Pancreas (tissue), 10 donors: ENCODE measurements at regions of chr4 and their contacts with region 1.

Region 1: DNA sequence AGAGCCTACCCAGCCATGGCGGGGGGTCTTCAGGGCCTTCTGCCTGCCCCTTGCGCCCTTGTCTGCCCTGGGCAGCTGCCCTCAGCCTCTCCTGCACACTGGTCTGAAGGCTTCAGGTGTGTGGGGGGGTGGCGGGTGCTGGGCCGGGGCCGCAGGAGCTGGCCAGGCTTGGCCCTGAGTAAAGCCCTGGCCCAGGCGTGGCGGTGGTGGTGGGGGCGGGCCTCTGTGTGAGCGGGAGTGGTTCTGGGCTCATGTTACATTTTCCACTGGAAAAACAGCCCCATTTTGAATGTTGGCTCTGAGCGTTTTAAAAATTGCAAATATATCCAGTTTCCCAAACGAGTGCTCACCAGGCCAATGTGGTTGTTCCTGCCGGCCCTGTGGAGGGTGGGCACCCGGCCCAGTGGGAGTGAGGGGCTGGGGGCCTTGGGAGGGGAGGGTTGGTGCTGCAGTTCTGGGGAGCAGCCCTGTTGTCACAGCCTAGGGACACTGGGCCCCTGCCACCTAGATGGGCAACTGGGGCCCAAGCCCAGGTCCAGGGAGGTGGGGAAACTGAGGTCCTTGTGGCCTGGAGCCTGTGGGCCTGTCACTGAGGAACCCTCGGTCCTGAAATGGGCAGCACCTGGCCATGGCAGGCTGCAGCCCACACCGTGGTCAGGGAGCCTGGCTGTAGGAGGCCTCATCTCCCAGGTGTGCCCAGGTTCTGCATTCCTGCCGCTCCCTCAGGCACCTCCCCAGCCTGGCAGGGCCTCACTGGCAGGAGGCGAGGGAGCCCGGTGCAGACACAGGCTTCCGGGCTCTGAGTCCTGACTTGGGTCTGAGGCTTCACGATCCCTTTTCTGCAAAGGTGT is 28.3 kb downstream of the FGFRL1 start:
- DNase-seq: peak; percentile 63 to 82 (median 72)
- ATAC-seq: peak; percentile 63 to 80 (median 77)
- H3K4me3 ChIP-seq: no peak overlapping the region
- H3K27ac ChIP-seq: peak overlapping the region in 2 of 4 donors; percentile 22 to 41
- H3K4me1 ChIP-seq: peaks cover 4 to 9% (median 5%) of the 10 kb centered on the region in 3 donors
- H3K27me3 ChIP-seq: no peaks in the 10 kb centered on the region
- CTCF ChIP-seq: no peak

Region 2: GRCh38 chr4:288891-289290 is 750.8 kb before region 1 on chr4:
- intact Hi-C with region 1: loop called in 1 of 3 experiments (anchors 10 kb)
- DNase-seq: no peak
- ATAC-seq: no peak
- H3K4me3 ChIP-seq: no peak overlapping the region
- H3K27ac ChIP-seq: no peak overlapping the region
- H3K4me1 ChIP-seq: no peaks in the 10 kb centered on the region
- H3K27me3 ChIP-seq: no peaks in the 10 kb centered on the region
- CTCF ChIP-seq: no peak

Region 3: GRCh38 chr4:1200425-1201035 is 160.8 kb after region 1 on chr4:
- intact Hi-C with region 1: no loop called
- DNase-seq: peak in 4 of 6 donors; percentile 14 to 70 (median 28)
- ATAC-seq: peak in 3 of 4 donors; percentile 15 to 39 (median 30)
- H3K4me3 ChIP-seq: peak overlapping the region in 1 of 4 donors; percentile 3
- H3K27ac ChIP-seq: no peak overlapping the region
- H3K4me1 ChIP-seq: no peaks in the 10 kb centered on the region
- H3K27me3 ChIP-seq: no peaks in the 10 kb centered on the region
- CTCF ChIP-seq: no peak

Region 4: GRCh38 chr4:1249148-1249730 is 209.5 kb after region 1 on chr4:
- intact Hi-C with region 1: no loop called
- DNase-seq: peak; percentile 82 to 93 (median 86)
- ATAC-seq: peak; percentile 45 to 65 (median 54)
- H3K4me3 ChIP-seq: peak overlapping the region; percentile 65 to 95 (median 70)
- H3K27ac ChIP-seq: peak overlapping the region; percentile 83 to 95 (median 91)
- H3K4me1 ChIP-seq: peaks cover 19 to 34% (median 29%) of the 10 kb centered on the region in 3 donors
- H3K27me3 ChIP-seq: no peaks in the 10 kb centered on the region
- CTCF ChIP-seq: no peak

Region 5: DNA sequence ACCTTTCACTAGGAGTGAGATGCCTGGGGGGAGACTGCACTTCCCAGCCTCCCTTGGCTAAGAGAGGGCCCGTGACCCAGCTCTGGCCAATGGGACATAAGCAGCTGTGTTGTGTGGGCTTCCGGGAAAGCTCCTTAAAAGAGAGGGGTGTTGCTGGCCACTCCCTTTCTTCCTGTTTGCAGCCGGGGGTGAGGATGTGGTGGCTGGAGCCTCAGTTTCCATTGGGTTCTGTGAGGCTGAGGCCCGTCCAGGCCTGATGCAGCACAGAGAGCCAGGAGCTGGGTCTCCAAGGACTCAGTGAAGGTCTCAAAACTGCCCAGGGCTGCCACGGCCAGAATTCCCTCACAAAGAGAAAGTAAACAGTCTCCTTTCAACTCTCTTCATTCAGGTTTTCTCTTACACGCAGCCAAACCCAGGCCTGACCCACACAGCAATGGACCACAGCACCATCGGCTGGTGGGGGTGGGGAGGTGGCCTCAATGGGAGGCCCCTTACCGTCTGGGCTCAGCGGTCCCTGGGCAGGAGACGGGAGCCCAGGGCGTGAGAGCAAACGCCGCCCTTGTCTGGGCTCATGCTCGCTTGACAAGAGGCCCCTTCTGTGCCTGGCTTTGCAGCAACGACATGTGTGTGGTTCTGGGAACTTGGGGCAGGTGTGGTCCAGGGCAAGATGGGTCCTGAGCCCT is 359.9 kb after region 1 on chr4:
- intact Hi-C with region 1: no loop called
- DNase-seq: peak in 1 of 6 donors; percentile 5
- ATAC-seq: no peak
- H3K4me3 ChIP-seq: no peak overlapping the region
- H3K27ac ChIP-seq: no peak overlapping the region
- H3K4me1 ChIP-seq: peaks cover 0 to 3% (median 0%) of the 10 kb centered on the region in 3 donors
- H3K27me3 ChIP-seq: peaks cover 0 to 25% (median under 1%) of the 10 kb centered on the region in 4 donors
- CTCF ChIP-seq: no peak